Activated naive CD4-positive, alpha-beta T cell treated with anti-CD3 and anti-CD28 coated beads for 36 hours (primary cell): ENCODE measurements at regions of chr5 and their contacts with region 1.

Region 1: GRCh38 chr5:6632917-6633468 is at the starts of genes NSUN2 and SRD5A1:
- DNase-seq: peak; percentile 88
- H3K4me3 Mint-ChIP-seq: peak within 1 kb of the TSS; percentile 93
- H3K27ac Mint-ChIP-seq: peak within 1 kb of the TSS; percentile 98
- H3K4me1 Mint-ChIP-seq: peaks cover 35% of the 10 kb centered on the region
- H3K27me3 Mint-ChIP-seq: no peaks in the 10 kb centered on the region
- total RNA-seq, gene NSUN2: 59.0 to 60.5 TPM
- total RNA-seq, gene SRD5A1: 5.2 to 5.4 TPM

Region 2: GRCh38 chr5:4953576-4953975 is 1679.4 kb before region 1 on chr5:
- CTCF ChIA-PET with region 1: no interaction called
- intact Hi-C with region 1: loop called (anchors 5 kb)
- DNase-seq: no peak
- H3K4me3 Mint-ChIP-seq: no peak overlapping the region
- H3K27ac Mint-ChIP-seq: no peak overlapping the region
- H3K4me1 Mint-ChIP-seq: no peaks in the 10 kb centered on the region
- H3K27me3 Mint-ChIP-seq: peaks cover 4% of the 10 kb centered on the region

Region 3: DNA sequence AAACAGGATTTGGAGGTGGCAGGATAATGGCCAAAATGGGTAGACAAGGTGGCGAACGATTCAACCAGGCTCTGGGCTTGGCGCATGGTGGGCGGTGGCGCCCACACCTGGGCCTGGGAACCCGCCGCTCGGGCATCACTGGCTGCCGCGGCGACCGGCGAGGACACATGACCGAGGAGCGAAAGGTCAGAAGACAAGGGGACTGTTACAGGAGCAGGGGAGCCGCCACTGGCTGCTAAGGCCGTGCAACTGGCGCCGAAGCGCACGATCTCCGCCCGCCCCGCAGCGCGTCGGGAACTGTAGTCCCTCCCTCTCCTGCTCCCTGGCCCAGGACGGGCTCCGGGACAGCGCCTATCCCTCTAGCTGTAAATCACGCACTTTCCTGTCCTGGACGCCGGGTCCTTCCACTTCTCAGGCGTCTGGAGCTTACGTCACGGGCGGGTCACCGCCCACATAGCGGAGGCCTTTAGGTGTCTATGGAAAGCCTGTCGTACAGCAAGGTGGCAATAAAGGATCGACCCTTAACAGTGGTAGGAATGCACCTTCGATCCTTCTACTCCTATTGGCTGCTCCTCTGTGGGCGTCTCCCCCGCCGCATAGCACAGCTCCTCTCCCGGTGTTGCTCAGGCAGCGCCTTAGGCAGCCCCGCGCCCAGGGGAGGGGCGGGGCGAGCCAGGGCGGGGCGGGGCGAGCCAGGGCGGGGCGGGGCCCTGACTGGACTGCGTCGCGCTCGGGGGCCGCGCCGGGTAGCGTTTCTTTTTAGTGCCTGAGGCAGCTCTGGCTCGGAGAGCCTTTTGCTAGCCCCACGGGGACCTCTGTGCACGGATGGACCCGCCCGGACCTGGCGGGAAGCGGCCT is 1210.8 kb before region 1 on chr5 and contains the start of gene ICE1:
- CTCF ChIA-PET with region 1: no interaction called
- intact Hi-C with region 1: loop called (anchors 1 kb)
- DNase-seq: peak; percentile 95
- H3K4me3 Mint-ChIP-seq: peak within 1 kb of the TSS; percentile 95
- H3K27ac Mint-ChIP-seq: peak within 1 kb of the TSS; percentile 91
- H3K4me1 Mint-ChIP-seq: peaks cover 19% of the 10 kb centered on the region
- H3K27me3 Mint-ChIP-seq: no peaks in the 10 kb centered on the region
- total RNA-seq, gene ICE1: 19.1 to 20.6 TPM

Region 4: GRCh38 chr5:6745706-6746222 is 112.8 kb after region 1 on chr5:
- CTCF ChIA-PET with region 1: interaction called, 7 read pairs
- intact Hi-C with region 1: loop called (anchors 1 kb)
- DNase-seq: peak; percentile 35
- H3K4me3 Mint-ChIP-seq: no peak overlapping the region
- H3K27ac Mint-ChIP-seq: no peak overlapping the region
- H3K4me1 Mint-ChIP-seq: peaks cover 7% of the 10 kb centered on the region
- H3K27me3 Mint-ChIP-seq: no peaks in the 10 kb centered on the region

Region 5: DNA sequence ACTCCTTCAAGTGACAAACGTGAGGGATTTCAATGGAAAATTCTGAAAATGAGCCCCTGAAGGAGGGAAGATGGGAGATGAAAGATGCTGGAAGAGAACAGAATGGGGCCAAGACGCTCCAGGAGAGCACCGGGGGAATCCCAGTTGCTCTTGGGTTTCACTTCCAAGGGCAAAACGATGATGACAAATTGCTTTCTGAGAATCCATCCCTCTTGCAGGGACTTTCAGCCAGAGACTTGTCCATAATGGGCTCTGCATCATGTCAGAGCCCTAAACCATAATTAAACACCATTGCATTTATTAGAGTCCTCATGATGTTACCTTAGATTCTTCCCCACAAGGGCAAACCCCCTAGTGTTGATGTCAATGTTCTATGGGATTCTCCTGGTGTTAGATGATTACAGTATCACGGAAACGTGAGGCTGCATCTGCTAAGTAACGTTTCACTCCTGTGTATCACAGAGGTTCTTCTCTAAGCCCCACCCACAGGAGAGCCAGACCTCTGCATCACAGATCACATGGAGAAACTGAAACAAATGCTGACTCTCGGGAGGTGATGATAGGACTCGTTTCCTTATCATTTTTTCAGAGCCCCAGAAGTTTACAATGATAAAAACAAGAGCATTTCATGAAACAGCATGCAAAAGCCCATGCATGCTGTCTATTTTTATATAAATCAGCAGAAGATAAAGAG is 194.7 kb after region 1 on chr5:
- CTCF ChIA-PET with region 1: no interaction called
- intact Hi-C with region 1: loop called (anchors 1 kb)
- DNase-seq: peak; percentile 59
- H3K4me3 Mint-ChIP-seq: peak overlapping the region; percentile 11
- H3K27ac Mint-ChIP-seq: no peak overlapping the region
- H3K4me1 Mint-ChIP-seq: peaks cover 31% of the 10 kb centered on the region
- H3K27me3 Mint-ChIP-seq: peaks cover 22% of the 10 kb centered on the region

Region 6: DNA sequence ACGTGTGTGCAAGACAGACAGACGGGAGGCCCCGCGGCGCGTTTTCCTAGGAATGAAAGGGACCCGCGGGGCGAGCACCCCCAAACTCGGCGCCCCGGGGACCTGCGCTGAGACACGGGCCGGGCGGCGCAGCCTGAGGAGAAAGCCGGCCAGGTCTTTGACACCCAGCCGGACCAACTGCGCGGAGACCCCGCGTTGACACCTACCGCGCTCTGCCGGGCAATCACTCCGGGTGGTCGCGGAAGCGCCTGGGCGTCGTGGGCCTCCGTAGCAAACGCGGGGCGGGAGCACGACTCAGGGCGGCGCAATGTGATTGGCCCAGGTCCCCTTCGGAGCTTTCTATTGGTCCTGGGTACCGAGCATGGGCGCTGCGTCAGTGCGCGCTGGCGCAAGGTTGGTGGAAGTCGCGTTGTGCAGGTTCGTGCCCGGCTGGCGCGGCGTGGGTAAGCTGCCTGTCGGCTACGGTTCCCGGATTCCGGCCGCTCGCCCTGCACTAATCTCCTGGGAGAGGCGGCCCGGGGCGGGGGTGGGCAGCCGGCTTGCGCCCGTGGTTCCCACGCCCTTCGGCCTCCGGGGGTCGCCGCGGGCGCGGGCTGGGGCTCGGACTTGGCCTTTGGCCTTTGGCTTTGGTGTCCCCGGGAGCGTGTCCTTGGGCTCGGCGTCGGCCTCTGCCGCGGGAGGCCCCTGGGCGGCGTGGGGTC is 1235.9 kb after region 1 on chr5 and contains the starts of genes FASTKD3 and MTRR:
- CTCF ChIA-PET with region 1: no interaction called
- intact Hi-C with region 1: loop called (anchors 1 kb)
- DNase-seq: peak; percentile 91
- H3K4me3 Mint-ChIP-seq: peak within 1 kb of the TSS; percentile 96
- H3K27ac Mint-ChIP-seq: peak within 1 kb of the TSS; percentile 82
- H3K4me1 Mint-ChIP-seq: peaks cover 64% of the 10 kb centered on the region
- H3K27me3 Mint-ChIP-seq: no peaks in the 10 kb centered on the region
- total RNA-seq, gene FASTKD3: 4.0 to 7.7 TPM
- total RNA-seq, gene MTRR: 34.0 to 35.1 TPM